ENCODE measurements at regions of chr9 and their contacts with region 1.

Region 1: DNA sequence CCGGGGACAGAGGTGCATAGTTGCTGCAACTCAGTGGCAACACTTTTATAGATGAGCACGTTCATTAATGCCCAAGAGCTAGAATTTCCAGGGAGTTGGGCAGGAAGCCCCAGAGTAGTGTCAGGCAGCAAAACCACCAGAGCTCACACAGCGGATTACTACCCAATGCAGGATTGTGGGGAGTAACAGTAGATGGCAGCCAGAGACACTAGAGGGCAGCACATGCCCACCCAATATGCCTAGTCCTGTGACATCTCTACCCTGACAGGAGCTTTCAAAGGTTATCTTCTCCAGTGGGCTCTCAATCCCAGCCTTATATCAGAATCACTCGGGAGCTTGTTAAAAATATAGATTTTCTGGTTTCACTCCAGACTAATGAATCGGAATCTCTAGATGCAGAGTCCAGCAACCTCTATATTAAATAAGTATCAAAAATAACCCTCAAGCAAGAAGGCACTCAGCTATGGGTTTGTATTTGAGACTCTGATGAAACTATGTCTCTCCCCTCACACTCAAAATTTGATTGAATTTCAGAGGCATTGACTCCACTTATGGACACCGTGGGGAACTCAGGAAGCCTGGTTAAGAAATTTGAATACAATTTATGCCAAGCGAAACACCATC is 58.4 kb upstream of the PHF24 start:
- DNase-seq: peak; percentile 86
- ATAC-seq: peak; percentile 97

Region 2: GRCh38 chr9:34744295-34745221 is 155.1 kb before region 1 on chr9:
- intact Hi-C with region 1: no loop called
- DNase-seq: no peak
- ATAC-seq: peak; percentile 30

Region 3: DNA sequence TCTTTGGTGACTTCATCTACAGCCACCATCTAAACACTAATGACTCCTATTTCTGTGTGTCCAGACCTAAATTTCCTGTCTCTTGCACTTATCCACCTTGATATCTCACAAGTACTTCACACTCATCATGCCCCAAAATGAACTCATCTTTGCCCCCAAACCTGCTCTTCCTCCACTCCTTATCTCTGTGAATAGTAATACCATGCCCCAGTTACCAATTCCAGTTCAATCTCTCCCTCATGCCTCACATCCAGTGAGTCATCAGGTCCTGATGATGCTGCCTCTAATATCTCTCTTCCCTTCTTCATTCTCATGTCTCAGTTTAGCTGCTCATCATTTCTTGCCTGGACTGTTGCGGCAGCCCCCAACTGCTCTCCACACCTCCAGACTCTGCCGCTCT is 75.0 kb after region 1 on chr9:
- intact Hi-C with region 1: loop called (anchors 10 kb)
- DNase-seq: no peak
- ATAC-seq: no peak

Region 4: GRCh38 chr9:34989003-34989945 is 89.6 kb after region 1 on chr9 and contains the start of gene DNAJB5:
- intact Hi-C with region 1: no loop called
- DNase-seq: peak; percentile 99
- ATAC-seq: peak; percentile 97
- total RNA-seq, gene DNAJB5: 10.6 TPM

Measured in sciatic nerve (tissue), 2 donors.